Naive thymus-derived CD8-positive, alpha-beta T cell (primary cell): ENCODE measurements at regions of chr19 and their contacts with region 1.

Region 1: GRCh38 chr19:21328885-21329605 is at the start of gene ZNF708:
- DNase-seq: peak; percentile 51 to 85 (median 70)
- ATAC-seq: peak; percentile 94 to 96
- H3K4me3 Mint-ChIP-seq: peak within 1 kb of the TSS; percentile 97 to 99 (median 99)
- H3K27ac Mint-ChIP-seq: peak within 1 kb of the TSS; percentile 98 to 99 (median 99)
- H3K4me1 Mint-ChIP-seq: peaks cover 16 to 50% (median 38%) of the 10 kb centered on the region in 4 donors
- H3K27me3 Mint-ChIP-seq: no peaks in the 10 kb centered on the region
- polyA plus RNA-seq, gene ZNF708: 11.8 to 15.1 (median 14.0) TPM

Region 2: GRCh38 chr19:20565321-20566018 is 763.6 kb before region 1 on chr19 and contains the start of gene ZNF737:
- POLR2A ChIA-PET with region 1: interaction called, 14 read pairs
- DNase-seq: peak; percentile 78 to 97 (median 93)
- ATAC-seq: peak; percentile 96
- H3K4me3 Mint-ChIP-seq: peak within 1 kb of the TSS; percentile 97 to 100 (median 99)
- H3K27ac Mint-ChIP-seq: peak within 1 kb of the TSS; percentile 97 to 100 (median 98)
- H3K4me1 Mint-ChIP-seq: peaks cover 9 to 36% (median 27%) of the 10 kb centered on the region in 4 donors
- H3K27me3 Mint-ChIP-seq: no peaks in the 10 kb centered on the region
- polyA plus RNA-seq, gene ZNF737: 10.7 to 15.1 (median 10.8) TPM

Region 3: GRCh38 chr19:20776083-20777076 is 552.7 kb before region 1 on chr19 and contains the start of gene ZNF66:
- POLR2A ChIA-PET with region 1: interaction called, 14 read pairs
- DNase-seq: peak; percentile 79 to 97 (median 95)
- ATAC-seq: peak; percentile 98
- H3K4me3 Mint-ChIP-seq: peak within 1 kb of the TSS; percentile 92 to 100 (median 99)
- H3K27ac Mint-ChIP-seq: peak within 1 kb of the TSS; percentile 93 to 99 (median 96)
- H3K4me1 Mint-ChIP-seq: peaks cover 8 to 31% (median 23%) of the 10 kb centered on the region in 4 donors
- H3K27me3 Mint-ChIP-seq: no peaks in the 10 kb centered on the region
- polyA plus RNA-seq, gene ZNF66: 3.4 to 4.1 (median 3.6) TPM

Region 4: GRCh38 chr19:21020298-21021227 is 308.5 kb before region 1 on chr19 and contains the start of gene ZNF430:
- POLR2A ChIA-PET with region 1: interaction called, 10 read pairs
- DNase-seq: peak; percentile 76 to 98 (median 94)
- ATAC-seq: peak; percentile 95 to 97
- H3K4me3 Mint-ChIP-seq: peak within 1 kb of the TSS; percentile 95 to 100 (median 100)
- H3K27ac Mint-ChIP-seq: peak within 1 kb of the TSS; percentile 100
- H3K4me1 Mint-ChIP-seq: peaks cover 17 to 54% (median 50%) of the 10 kb centered on the region in 4 donors
- H3K27me3 Mint-ChIP-seq: no peaks in the 10 kb centered on the region
- polyA plus RNA-seq, gene ZNF430: 48.7 to 55.7 (median 53.9) TPM

Region 5: GRCh38 chr19:21141787-21142464 is 187.1 kb before region 1 on chr19 and contains the start of gene ZNF431:
- POLR2A ChIA-PET with region 1: interaction called, 15 read pairs
- DNase-seq: peak; percentile 74 to 95 (median 88)
- ATAC-seq: peak; percentile 99
- H3K4me3 Mint-ChIP-seq: peak within 1 kb of the TSS; percentile 96 to 99 (median 98)
- H3K27ac Mint-ChIP-seq: peak within 1 kb of the TSS; percentile 95 to 99 (median 97)
- H3K4me1 Mint-ChIP-seq: peaks cover 16 to 47% (median 45%) of the 10 kb centered on the region in 4 donors
- H3K27me3 Mint-ChIP-seq: no peaks in the 10 kb centered on the region
- polyA plus RNA-seq, gene ZNF431: 9.8 to 15.4 (median 13.9) TPM

Region 6: DNA sequence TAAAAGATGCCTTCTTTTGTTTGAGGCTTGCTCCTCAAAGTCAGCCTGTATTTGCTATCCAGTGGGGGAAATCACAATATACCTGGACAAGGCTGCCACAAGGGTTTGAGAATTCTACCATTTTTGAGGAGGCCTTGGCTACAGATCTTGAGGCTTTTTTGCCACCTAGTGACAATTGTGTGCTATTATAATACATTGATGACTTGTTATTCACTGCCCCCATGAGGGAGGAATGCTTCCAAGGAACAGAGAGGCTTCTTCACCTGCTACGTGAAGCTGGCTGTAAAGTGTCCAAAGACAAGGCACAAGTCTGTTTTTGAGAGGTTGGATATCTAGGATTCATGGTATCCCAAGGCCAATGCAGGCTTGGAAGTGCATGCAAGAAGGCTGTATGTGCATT is 72.3 kb before region 1 on chr19:
- POLR2A ChIA-PET with region 1: no interaction called
- DNase-seq: no peak
- ATAC-seq: no peak
- H3K4me3 Mint-ChIP-seq: no peak overlapping the region
- H3K27ac Mint-ChIP-seq: no peak overlapping the region
- H3K4me1 Mint-ChIP-seq: peaks cover 0 to 1% (median 0%) of the 10 kb centered on the region in 4 donors
- H3K27me3 Mint-ChIP-seq: peaks cover 0 to 10% (median 0%) of the 10 kb centered on the region in 5 donors

Region 7: DNA sequence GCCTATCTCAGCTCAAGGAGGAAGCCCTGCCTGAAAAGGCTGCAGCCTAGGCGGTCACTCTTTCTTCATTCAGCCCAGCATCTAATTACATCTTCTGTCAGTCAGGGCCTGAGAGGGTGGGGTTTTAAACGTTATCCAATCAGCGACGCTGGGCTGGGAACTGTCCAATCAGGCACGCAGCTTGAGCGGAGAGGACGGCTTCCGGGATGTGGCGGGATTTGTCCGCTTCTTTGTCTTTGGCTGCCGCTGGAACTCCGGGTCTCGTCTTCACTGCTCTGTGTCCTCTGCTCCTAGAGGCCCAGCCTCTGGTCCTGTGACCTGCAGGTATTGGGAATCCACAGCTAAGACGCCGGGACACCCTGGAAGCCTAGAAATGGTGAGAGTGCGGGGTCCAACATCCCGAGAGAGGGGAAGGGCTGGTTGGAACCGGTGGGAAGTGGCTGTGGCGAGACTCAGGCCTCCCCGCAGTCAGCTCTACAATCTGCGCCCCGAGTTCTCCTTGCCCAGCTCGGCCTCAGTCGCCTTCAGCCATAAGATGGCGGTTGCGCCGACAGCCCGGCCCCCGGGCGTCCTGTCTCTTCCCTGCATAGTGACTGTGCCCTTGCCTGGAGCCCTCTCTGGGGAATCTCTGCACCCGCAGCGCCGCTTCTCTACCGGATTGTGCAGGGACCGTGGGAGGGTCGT is 29.9 kb after region 1 on chr19 and contains the start of gene ZNF738:
- POLR2A ChIA-PET with region 1: interaction called, 43 read pairs
- DNase-seq: peak; percentile 64 to 92 (median 78)
- ATAC-seq: peak; percentile 95
- H3K4me3 Mint-ChIP-seq: peak within 1 kb of the TSS; percentile 96 to 100 (median 99)
- H3K27ac Mint-ChIP-seq: peak within 1 kb of the TSS; percentile 93 to 97 (median 95)
- H3K4me1 Mint-ChIP-seq: peaks cover 0 to 22% (median 18%) of the 10 kb centered on the region in 4 donors
- H3K27me3 Mint-ChIP-seq: no peaks in the 10 kb centered on the region
- polyA plus RNA-seq, gene ZNF738: 3.9 to 4.1 (median 3.9) TPM

Region 8: DNA sequence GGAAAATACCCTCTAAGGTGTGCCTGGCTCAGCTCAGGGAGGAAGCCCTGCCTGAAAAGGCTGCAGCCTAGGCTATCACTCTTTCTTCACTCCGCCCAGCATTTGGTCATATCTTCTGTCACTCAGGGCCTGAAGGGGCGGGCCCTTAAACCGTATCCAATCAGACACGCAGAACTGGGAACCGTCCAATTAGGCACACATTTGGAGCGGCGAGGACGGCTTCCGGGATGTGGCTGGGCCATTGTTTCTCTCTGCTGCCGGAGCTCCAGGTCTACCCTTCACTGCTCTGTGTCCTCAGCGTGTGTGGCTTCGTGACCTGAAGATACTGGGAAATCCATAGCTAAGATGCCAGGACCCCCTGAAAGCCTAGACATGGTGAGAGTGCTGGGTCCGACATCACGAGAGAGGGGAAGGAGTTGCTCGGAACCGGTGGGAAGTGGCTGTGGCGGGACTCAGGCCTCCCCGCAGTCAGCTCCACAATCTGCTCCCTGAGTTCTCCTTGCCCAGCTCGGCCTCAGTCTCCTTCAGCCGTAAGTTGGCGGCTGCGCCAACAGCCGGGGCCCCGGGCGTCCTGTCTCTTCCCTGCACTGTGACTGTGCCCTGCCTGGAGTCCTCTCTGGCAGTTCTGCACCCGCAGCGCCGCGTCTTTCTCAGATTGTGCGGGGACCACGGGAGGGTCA is 68.0 kb after region 1 on chr19 and contains the start of gene ZNF493:
- POLR2A ChIA-PET with region 1: interaction called, 41 read pairs
- DNase-seq: peak; percentile 73 to 96 (median 92)
- ATAC-seq: peak; percentile 99
- H3K4me3 Mint-ChIP-seq: peak within 1 kb of the TSS; percentile 87 to 99 (median 98)
- H3K27ac Mint-ChIP-seq: peak within 1 kb of the TSS; percentile 86 to 97 (median 94)
- H3K4me1 Mint-ChIP-seq: peaks cover 8 to 42% (median 38%) of the 10 kb centered on the region in 4 donors
- H3K27me3 Mint-ChIP-seq: peaks cover 0 to 2% (median 0%) of the 10 kb centered on the region in 5 donors
- polyA plus RNA-seq, gene ZNF493: 20.4 to 28.1 (median 24.7) TPM

Region 9: GRCh38 chr19:21410166-21410565 is 81.1 kb after region 1 on chr19:
- POLR2A ChIA-PET with region 1: no interaction called
- DNase-seq: no peak
- ATAC-seq: no peak
- H3K4me3 Mint-ChIP-seq: no peak overlapping the region
- H3K27ac Mint-ChIP-seq: no peak overlapping the region
- H3K4me1 Mint-ChIP-seq: no peaks in the 10 kb centered on the region
- H3K27me3 Mint-ChIP-seq: no peaks in the 10 kb centered on the region